Activated CD4-positive, alpha-beta T cell treated with anti-CD3 and anti-CD28 coated beads, Interleukin-2, amount 10 ng/mL, durations not matched to agents 24 days and 14 days (primary cell): ENCODE measurements at regions of chr3 and their contacts with region 1.

Region 1: DNA sequence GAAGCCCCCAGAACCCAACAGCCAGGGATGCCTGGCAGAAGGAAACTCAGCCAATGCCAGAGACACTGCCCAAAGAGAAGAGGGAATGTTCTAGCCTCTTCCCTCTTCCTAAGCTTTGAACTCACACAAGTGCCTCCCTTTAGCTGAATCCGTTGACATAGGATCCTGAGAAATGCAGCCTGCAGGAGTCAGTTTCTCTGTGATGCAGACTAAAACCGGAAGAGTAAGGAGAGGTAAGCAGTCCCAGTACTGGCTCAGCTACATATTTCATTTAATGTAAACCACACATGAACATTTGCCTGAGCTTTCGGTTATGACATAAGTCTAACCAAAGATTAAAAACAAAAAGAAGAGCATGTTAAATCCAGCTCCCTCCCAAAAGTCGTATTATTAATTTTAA is 768.7 kb downstream of the TBL1XR1 start:
- DNase-seq: no peak
- H3K4me3 Mint-ChIP-seq: no peak overlapping the region
- H3K27ac Mint-ChIP-seq: no peak overlapping the region
- H3K4me1 Mint-ChIP-seq: no peaks in the 10 kb centered on the region
- H3K27me3 Mint-ChIP-seq: no peaks in the 10 kb centered on the region

Region 2: GRCh38 chr3:176469694-176470205 is 41.2 kb after region 1 on chr3:
- intact Hi-C with region 1: loop called (anchors 2 kb)
- DNase-seq: no peak
- H3K4me3 Mint-ChIP-seq: no peak overlapping the region
- H3K27ac Mint-ChIP-seq: no peak overlapping the region
- H3K4me1 Mint-ChIP-seq: no peaks in the 10 kb centered on the region
- H3K27me3 Mint-ChIP-seq: no peaks in the 10 kb centered on the region

Region 3: DNA sequence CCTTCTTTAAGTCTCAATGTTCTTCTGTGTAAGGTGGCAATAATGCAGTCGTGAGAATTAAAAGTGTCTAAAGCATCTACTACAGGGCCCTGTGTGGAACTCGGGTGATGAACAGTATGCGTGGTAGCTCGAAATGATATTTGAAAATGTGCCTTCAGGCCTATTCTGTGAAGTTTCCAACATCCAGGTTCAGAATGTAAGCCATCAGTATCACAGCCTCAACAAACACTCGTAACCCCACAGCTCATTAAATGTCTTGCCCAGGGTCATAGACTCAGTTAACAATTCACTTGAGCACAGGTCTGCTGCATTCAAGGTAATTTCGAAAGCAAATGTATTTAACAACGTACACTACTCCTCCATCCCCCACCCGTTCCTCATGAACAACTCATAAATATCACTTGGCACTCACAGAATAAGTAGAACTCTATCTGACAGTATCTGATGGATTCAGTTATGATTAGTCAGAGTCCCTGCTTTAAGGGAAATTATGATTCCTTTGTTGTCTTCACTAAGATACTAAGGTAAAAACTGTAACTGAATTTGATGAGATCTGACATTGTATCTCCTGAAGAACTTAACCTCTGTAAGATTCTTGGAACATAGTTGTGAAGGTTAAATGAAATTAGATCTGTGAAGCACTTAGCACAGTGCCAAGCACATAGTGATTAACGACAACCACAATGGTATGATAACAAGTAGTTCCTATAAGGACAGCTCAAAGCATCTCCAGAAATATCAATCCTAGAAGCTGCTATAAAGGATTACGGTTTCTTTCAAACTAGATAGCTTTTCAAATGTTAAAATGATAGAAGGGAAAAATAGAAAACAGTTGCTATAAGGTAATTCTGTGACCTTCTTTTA is 126.5 kb after region 1 on chr3:
- intact Hi-C with region 1: no loop called
- DNase-seq: no peak
- H3K4me3 Mint-ChIP-seq: no peak overlapping the region
- H3K27ac Mint-ChIP-seq: no peak overlapping the region
- H3K4me1 Mint-ChIP-seq: no peaks in the 10 kb centered on the region
- H3K27me3 Mint-ChIP-seq: no peaks in the 10 kb centered on the region

Region 4: DNA sequence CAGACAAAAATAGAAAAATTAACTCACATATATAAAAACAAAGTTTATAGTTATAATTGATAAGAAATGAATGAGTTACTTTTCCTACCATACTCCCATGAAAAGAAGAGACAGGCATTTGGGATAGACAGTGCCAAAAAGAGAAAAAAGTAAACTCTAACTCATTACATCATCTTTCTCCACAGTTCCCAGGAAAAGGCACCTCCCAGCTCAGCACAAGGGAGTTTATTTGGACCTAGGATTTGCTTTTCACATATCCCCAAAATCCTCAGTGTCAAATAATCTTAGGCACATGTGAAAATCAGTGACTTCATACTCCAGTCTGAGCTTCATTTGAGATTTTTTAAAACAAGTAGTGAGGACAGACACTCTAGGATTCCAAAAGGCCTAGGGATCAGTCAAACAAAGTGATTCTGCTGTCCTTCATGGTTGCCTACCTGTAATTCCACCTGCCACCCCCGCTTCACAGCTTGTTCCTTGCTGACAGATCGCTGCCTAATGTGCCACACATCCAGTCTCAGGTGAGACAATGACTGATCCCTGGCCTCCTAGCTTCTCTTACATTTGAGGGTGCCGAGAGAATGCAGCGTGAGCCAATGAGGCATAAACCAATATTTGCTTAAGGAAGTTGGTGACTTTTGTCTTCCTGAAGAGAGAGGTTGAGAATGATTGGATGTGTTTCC is 195.1 kb after region 1 on chr3:
- intact Hi-C with region 1: no loop called
- DNase-seq: no peak
- H3K4me3 Mint-ChIP-seq: no peak overlapping the region
- H3K27ac Mint-ChIP-seq: no peak overlapping the region
- H3K4me1 Mint-ChIP-seq: no peaks in the 10 kb centered on the region
- H3K27me3 Mint-ChIP-seq: no peaks in the 10 kb centered on the region